Activated CD4-positive, alpha-beta memory T cell treated with anti-CD3 and anti-CD28 coated beads for 36 hours (primary cell): ENCODE measurements at regions of chr12 and their contacts with region 1.

Region 1: GRCh38 chr12:52980693-52981423 is 25.4 kb upstream of the EIF4B start:
- DNase-seq: peak; percentile 89
- H3K4me3 Mint-ChIP-seq: no peak overlapping the region
- H3K27ac Mint-ChIP-seq: peak overlapping the region; percentile 9
- H3K4me1 Mint-ChIP-seq: no peaks in the 10 kb centered on the region
- H3K27me3 Mint-ChIP-seq: peaks cover 34% of the 10 kb centered on the region

Region 2: GRCh38 chr12:52156736-52157565 is 823.9 kb before region 1 on chr12:
- CTCF ChIA-PET with region 1: interaction called, 3 read pairs
- POLR2A ChIA-PET with region 1: no interaction called
- intact Hi-C with region 1: loop called (anchors 5 kb)
- DNase-seq: peak; percentile 81
- H3K4me3 Mint-ChIP-seq: no peak overlapping the region
- H3K27ac Mint-ChIP-seq: no peak overlapping the region
- H3K4me1 Mint-ChIP-seq: peaks cover 28% of the 10 kb centered on the region
- H3K27me3 Mint-ChIP-seq: no peaks in the 10 kb centered on the region

Region 3: DNA sequence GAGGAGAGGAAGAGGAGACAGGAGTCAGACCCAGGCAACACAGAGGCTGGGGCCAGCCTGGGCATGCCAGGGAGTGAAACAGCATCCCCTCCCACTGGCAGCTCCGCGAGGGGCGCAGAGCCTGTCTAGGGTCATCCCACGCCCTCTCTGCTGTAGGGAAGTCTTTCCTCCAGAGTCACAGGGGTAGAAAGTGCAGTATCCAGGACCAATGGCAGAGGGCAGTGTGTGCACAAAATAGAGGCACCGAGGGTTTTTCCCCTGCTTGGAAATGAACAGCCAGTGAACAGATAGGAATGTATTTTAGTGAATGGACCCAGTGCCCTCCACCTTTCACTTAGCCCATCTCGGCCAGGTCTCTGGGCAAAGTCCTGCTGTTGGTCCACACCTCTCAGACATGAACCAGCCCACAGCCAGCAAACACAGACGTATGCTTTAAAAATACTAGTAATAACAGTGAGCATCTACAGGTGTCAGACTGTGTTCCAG is 397.8 kb before region 1 on chr12:
- CTCF ChIA-PET with region 1: interaction called, 4 read pairs
- POLR2A ChIA-PET with region 1: no interaction called
- intact Hi-C with region 1: loop called (anchors 5 kb)
- DNase-seq: peak; percentile 74
- H3K4me3 Mint-ChIP-seq: no peak overlapping the region
- H3K27ac Mint-ChIP-seq: no peak overlapping the region
- H3K4me1 Mint-ChIP-seq: peaks cover 22% of the 10 kb centered on the region
- H3K27me3 Mint-ChIP-seq: no peaks in the 10 kb centered on the region

Region 4: GRCh38 chr12:52895061-52895887 is 85.6 kb before region 1 on chr12:
- CTCF ChIA-PET with region 1: interaction called, 557 read pairs
- POLR2A ChIA-PET with region 1: no interaction called
- intact Hi-C with region 1: no loop called
- DNase-seq: no peak
- H3K4me3 Mint-ChIP-seq: no peak overlapping the region
- H3K27ac Mint-ChIP-seq: no peak overlapping the region
- H3K4me1 Mint-ChIP-seq: no peaks in the 10 kb centered on the region
- H3K27me3 Mint-ChIP-seq: peaks cover 4% of the 10 kb centered on the region

Region 5: DNA sequence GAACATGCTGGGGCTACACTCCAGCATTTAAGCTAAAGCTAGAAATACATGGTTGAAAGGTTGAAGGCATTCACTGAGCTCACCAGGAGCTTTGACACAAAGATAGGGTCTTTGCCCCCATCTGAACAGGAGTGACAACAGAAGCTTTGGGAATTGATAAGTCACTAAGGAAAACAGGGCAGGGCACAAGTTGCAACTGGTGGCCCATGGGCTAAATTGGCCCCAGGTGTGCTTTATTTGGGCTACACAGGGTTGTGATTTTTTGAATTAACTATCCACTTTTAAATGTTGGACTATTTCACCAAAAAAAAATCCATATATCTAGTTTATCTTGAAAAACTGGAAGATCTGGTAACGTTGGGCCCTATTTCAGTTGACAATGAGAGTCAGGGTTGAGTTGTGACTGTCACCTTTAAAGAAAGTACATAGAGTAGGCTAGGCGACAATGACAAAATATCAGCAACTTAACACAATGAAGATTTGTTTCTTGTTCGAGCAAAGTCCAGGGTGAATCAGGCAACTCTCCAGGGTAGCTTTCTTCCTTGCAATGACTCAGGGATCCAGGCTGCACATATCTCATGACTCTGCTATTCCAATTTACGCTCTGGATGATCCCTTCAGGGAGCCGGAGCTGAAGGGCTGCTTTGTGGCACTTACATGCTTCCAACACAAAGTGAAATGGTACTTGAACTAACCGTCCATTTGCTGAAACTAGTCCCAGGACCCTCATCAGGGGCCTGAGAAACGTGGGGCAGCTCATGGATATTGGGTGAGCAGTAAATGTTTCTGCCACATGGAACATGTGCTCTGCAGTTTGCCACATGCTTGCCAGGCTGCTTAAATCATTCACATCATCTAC is 12.1 kb after region 1 on chr12:
- CTCF ChIA-PET with region 1: interaction called, 15 read pairs
- POLR2A ChIA-PET with region 1: no interaction called
- intact Hi-C with region 1: no loop called
- DNase-seq: no peak
- H3K4me3 Mint-ChIP-seq: no peak overlapping the region
- H3K27ac Mint-ChIP-seq: no peak overlapping the region
- H3K4me1 Mint-ChIP-seq: no peaks in the 10 kb centered on the region
- H3K27me3 Mint-ChIP-seq: no peaks in the 10 kb centered on the region